ENCODE measurements at regions of chr12 and their contacts with region 1.

Region 1: GRCh38 chr12:43758728-43759563 is at the starts of genes IRAK4 and PUS7L:
- DNase-seq: peak; percentile 85 to 98
- H3K4me3 ChIP-seq: peak within 1 kb of the TSS; percentile 53 to 78
- H3K27ac ChIP-seq: peak within 1 kb of the TSS; percentile 75 to 88
- H3K4me1 ChIP-seq: peaks cover 4 to 21% of the 10 kb centered on the region in 2 donors
- H3K27me3 ChIP-seq: no peaks in the 10 kb centered on the region
- CTCF ChIP-seq: peak; percentile 38 to 50 (median 46)
- total RNA-seq, gene IRAK4: 7.3 TPM
- total RNA-seq, gene PUS7L: 2.4 TPM

Region 2: GRCh38 chr12:42325653-42326474 is 1433.1 kb before region 1 on chr12 and contains the starts of genes PPHLN1 and ZCRB1:
- intact Hi-C with region 1: loop called (anchors 5 kb)
- DNase-seq: peak; percentile 33 to 86
- H3K4me3 ChIP-seq: peak within 1 kb of the TSS; percentile 78 to 82
- H3K27ac ChIP-seq: peak within 1 kb of the TSS; percentile 84 to 89
- H3K4me1 ChIP-seq: peaks cover 0 to 13% of the 10 kb centered on the region in 2 donors
- H3K27me3 ChIP-seq: no peaks in the 10 kb centered on the region
- CTCF ChIP-seq: no peak
- total RNA-seq, gene PPHLN1: 1.7 TPM
- total RNA-seq, gene ZCRB1: 4.4 TPM

Region 3: GRCh38 chr12:43737646-43738045 is 21.3 kb before region 1 on chr12:
- intact Hi-C with region 1: no loop called
- DNase-seq: no peak
- H3K4me3 ChIP-seq: no peak overlapping the region
- H3K27ac ChIP-seq: no peak overlapping the region
- H3K4me1 ChIP-seq: no peaks in the 10 kb centered on the region
- H3K27me3 ChIP-seq: no peaks in the 10 kb centered on the region
- CTCF ChIP-seq: no peak

Region 4: GRCh38 chr12:43824207-43824775 is 65.3 kb after region 1 on chr12:
- intact Hi-C with region 1: no loop called
- DNase-seq: no peak
- H3K4me3 ChIP-seq: no peak overlapping the region
- H3K27ac ChIP-seq: no peak overlapping the region
- H3K4me1 ChIP-seq: no peaks in the 10 kb centered on the region
- H3K27me3 ChIP-seq: no peaks in the 10 kb centered on the region
- CTCF ChIP-seq: no peak

Region 5: GRCh38 chr12:43835656-43836474 is 76.9 kb after region 1 on chr12 and contains the start of gene TMEM117:
- intact Hi-C with region 1: loop called (anchors 1 kb)
- DNase-seq: peak; percentile 13 to 82
- H3K4me3 ChIP-seq: peak within 1 kb of the TSS; percentile 88 to 89
- H3K27ac ChIP-seq: peak within 1 kb of the TSS; percentile 97
- H3K4me1 ChIP-seq: peaks cover 0 to 12% of the 10 kb centered on the region in 2 donors
- H3K27me3 ChIP-seq: no peaks in the 10 kb centered on the region
- CTCF ChIP-seq: no peak
- total RNA-seq, gene TMEM117: 0.43 TPM

Measured in ascending aorta (tissue), 2 donors.